ENCODE measurements at regions of chr1 and their contacts with region 1.

Region 1: DNA sequence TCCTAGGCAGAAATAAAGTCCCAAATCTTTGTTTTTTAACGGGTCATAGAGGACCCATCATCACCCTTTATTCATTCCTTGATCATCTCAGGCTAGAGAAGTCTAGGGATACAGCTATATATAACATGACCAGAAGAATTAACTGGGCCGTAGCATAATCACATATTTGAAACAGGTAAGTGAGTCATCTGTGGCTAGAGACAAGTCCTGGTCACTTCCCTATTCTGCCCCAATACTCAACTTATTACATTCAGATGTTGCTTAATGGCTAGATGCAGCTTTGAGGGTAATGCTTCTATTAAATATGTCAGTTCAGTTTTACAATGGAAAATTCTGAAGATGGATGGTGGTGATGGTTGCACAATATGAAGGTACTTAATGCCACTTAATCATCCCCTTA is 47.0 kb downstream of the EXO1 start:
- DNase-seq: no peak
- H3K4me3 ChIP-seq: no peak overlapping the region
- H3K27ac ChIP-seq: no peak overlapping the region
- H3K4me1 ChIP-seq: peaks cover 17% of the 10 kb centered on the region
- CTCF ChIP-seq: no peak

Region 2: GRCh38 chr1:241934201-241934848 is 39.3 kb after region 1 on chr1:
- CTCF ChIA-PET with region 1: no interaction called
- POLR2A ChIA-PET with region 1: no interaction called
- intact Hi-C with region 1: no loop called
- DNase-seq: no peak
- H3K4me3 ChIP-seq: no peak overlapping the region
- H3K27ac ChIP-seq: no peak overlapping the region
- H3K4me1 ChIP-seq: no peaks in the 10 kb centered on the region
- CTCF ChIP-seq: no peak

Region 3: GRCh38 chr1:241985787-241986186 is 90.8 kb after region 1 on chr1:
- CTCF ChIA-PET with region 1: no interaction called
- POLR2A ChIA-PET with region 1: no interaction called
- intact Hi-C with region 1: loop called (anchors 5 kb)
- DNase-seq: peak; percentile 39
- H3K4me3 ChIP-seq: no peak overlapping the region
- H3K27ac ChIP-seq: no peak overlapping the region
- H3K4me1 ChIP-seq: no peaks in the 10 kb centered on the region
- CTCF ChIP-seq: peak; percentile 67

Region 4: DNA sequence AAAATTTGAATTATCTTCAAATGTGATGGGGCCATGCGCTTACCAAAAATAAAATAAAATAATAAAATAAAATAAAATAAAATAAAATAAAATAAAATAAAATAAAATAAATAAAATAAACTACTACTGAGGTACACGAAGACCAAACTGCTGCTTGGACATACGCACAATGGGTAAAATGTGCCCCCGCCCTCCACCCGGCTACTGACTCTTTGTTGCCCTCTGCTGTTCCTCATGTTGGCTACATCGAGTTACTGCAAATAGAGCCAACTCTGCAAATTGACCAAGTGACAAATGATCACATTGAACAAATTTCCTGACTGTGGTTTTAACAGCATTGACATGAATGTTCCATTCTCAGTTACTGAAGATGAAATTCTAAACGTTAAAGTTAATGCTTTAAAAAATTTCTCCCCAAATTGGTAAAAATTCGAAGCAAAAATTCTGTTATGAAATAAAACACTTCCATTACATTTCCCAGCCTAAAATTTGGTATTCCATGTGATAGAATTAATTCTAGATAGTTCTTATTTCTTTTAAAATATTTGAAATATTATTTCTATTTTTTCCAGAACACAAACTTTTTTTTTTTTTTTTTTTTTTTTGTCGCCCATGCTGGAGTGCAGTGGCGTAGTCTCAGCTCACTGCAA is 122.7 kb after region 1 on chr1:
- CTCF ChIA-PET with region 1: no interaction called
- POLR2A ChIA-PET with region 1: no interaction called
- intact Hi-C with region 1: loop called (anchors 2 kb)
- DNase-seq: peak; percentile 53
- H3K4me3 ChIP-seq: no peak overlapping the region
- H3K27ac ChIP-seq: no peak overlapping the region
- H3K4me1 ChIP-seq: no peaks in the 10 kb centered on the region
- CTCF ChIP-seq: peak; percentile 80

Region 5: GRCh38 chr1:242690849-242691602 is 796.0 kb after region 1 on chr1:
- CTCF ChIA-PET with region 1: no interaction called
- POLR2A ChIA-PET with region 1: no interaction called
- intact Hi-C with region 1: no loop called
- DNase-seq: no peak
- H3K4me3 ChIP-seq: no peak overlapping the region
- H3K27ac ChIP-seq: no peak overlapping the region
- H3K4me1 ChIP-seq: no peaks in the 10 kb centered on the region
- CTCF ChIP-seq: no peak